ENCODE measurements at regions of chr2 and their contacts with region 1.

Region 1: DNA sequence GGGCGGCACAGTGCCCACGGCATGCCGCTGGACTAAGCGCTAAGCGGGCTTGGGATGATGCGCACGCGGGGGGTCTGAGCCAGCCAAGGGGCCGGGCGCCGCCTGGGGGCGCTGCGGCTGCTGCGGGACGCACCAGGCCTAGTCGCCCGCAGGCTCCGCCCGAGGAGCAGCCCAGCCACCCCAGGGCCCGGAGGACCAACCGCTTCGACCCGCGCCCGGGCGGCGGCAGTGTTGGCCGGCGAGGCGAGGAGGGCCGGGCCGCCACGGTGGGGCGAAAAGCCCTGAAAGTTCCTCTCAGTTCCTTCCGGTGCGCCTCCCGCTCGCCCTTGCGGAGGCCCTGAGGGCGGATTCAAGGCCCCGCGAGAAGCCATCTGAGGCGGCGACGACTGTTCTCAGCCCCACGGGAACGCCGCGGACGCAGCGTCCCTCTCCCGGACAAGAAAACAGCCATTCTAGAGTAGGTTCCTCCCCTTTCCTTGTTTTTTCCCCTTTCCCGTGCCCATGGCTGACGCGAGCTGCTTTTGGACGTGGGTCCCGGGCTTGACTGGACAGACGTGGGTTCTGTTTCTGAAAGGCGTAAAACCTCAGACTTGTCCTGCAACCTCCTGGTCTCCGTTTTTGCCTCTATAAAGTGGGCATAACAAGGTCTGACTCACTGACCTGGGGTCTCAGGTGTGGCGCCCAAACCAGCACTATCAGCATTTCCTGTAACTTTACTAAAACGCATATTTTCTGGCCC is at the start of gene ANKAR:
- DNase-seq: peak; percentile 78
- H3K4me3 Mint-ChIP-seq: peak within 1 kb of the TSS; percentile 89
- H3K27ac Mint-ChIP-seq: peak within 1 kb of the TSS; percentile 94
- H3K4me1 Mint-ChIP-seq: peaks cover 35% of the 10 kb centered on the region
- H3K27me3 Mint-ChIP-seq: no peaks in the 10 kb centered on the region
- total RNA-seq, gene ANKAR: 1.6 to 2.5 TPM

Region 2: DNA sequence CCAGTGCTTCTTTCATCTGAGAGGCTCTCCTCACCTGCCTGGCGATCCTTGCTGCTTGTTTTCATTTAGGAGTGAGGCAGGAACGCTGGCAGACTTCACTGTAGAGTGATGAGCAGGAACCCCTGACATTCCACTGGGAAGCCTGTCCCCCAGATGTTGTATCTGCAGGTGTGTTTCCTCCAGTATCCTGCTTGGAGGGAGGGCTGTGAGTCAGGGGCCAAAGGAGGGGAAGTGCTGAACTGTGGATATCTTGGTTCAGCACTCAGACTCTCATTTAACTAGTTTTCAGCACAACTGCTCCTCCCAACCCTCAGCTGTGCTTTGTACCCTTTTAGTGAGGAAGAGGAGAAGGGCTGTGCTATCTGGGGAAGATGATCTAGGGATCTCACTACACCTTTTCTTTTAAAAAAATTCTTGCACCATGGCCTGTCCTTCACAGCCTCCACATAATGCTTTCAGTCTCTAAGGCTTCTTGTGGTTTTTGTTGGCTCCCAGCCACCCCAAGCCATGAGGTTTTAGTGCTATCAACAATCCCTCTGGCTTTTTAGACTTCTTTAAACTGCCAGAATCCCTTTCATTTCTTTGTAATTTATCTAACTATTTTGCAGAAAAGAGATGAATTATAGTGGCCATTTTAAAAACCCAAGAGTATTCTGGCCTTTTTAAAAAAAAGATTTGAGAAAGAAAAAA is 11.1 kb after region 1 on chr2:
- CTCF ChIA-PET with region 1: interaction called, 25 read pairs
- intact Hi-C with region 1: no loop called
- DNase-seq: no peak
- H3K4me3 Mint-ChIP-seq: no peak overlapping the region
- H3K27ac Mint-ChIP-seq: no peak overlapping the region
- H3K4me1 Mint-ChIP-seq: peaks cover 27% of the 10 kb centered on the region
- H3K27me3 Mint-ChIP-seq: no peaks in the 10 kb centered on the region

Measured in activated naive CD4-positive, alpha-beta T cell treated with anti-CD3 and anti-CD28 coated beads for 36 hours (primary cell).